ENCODE measurements at regions of chr19 and their contacts with region 1.

Region 1: DNA sequence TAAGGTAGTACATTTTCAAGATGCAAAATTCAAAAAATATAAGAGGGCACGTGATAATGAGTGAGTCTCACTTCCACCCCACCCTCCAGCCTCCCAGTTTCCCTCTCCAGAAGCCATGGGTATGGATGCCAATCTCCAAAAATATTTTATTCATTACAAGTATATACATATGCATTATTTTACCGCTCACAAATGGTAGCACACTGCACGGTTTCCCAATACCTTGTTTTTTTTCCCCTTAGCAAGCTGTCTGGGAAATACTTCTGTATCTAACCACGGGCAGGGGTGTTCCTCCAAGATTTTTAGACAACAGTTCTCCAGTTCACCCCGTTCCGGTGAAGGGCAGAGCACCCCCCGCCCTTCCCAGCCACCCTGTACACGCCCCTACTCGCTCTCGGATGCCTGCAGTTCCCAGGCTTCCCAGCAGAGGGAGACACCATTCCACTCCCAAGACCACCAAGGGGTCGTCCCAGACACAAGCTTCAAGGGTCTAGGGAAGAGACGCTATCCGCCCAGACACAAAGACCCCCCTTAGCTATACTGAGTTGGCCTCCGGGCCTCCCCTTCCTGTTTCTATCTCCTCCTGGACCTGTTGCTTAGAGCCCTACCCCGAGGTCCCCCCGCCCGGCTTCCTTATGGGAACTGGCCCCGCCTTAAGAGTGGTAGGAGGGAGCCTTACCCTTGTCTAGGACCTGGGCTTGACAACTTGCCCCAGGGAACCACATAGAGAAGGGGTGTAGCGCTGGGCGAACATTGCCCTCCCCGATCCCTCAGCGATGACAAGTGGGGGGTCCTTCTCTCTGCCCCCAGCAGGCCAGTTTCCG is 1.1 kb upstream of the FXYD3 start:
- DNase-seq: peak; percentile 56 to 64 (median 58)
- H3K4me3 ChIP-seq: no peak overlapping the region
- H3K4me3 Mint-ChIP-seq: peak overlapping the region in 2 of 8 donors; percentile 25 to 36
- H3K27ac ChIP-seq: no peak overlapping the region
- H3K27ac Mint-ChIP-seq: peak overlapping the region in 4 of 7 donors; percentile 30 to 77 (median 60)
- H3K4me1 ChIP-seq: peaks cover 9% of the 10 kb centered on the region
- H3K4me1 Mint-ChIP-seq: peaks cover 4 to 7% (median 5%) of the 10 kb centered on the region in 4 donors
- H3K27me3 ChIP-seq: no peaks in the 10 kb centered on the region
- H3K27me3 Mint-ChIP-seq: peaks cover 5 to 11% of the 10 kb centered on the region in 2 donors

Region 2: DNA sequence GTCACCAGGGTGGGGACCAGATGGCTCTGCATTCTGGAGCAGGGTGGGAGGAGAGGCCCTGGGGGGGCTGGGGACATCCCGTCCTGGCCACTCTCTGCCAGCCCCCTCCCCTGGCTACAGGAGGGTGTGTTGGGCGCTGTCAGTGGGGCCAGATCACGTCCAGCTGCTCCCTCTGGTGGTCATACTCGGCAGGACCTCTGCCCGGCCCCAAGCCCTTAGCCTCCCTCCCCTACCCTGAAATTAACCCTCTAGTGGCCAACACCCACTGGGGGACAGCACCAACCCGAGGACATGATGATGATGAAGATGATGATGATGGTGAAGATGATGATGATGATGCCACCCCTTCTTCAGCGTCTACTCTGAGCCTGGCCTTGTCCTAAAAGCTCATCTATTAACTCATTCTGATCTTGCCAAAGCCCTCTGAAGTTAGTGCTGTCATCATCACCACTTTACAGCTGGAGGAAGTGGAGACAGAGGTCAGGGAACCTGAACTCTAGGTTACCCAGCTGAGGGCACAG is 20.9 kb after region 1 on chr19:
- CTCF ChIA-PET with region 1: interaction called, 20 read pairs
- POLR2A ChIA-PET with region 1: no interaction called
- intact Hi-C with region 1: loop called (anchors 1 kb)
- DNase-seq: peak; percentile 48 to 66 (median 52)
- H3K4me3 ChIP-seq: no peak overlapping the region
- H3K4me3 Mint-ChIP-seq: no peak overlapping the region
- H3K27ac ChIP-seq: no peak overlapping the region
- H3K27ac Mint-ChIP-seq: peak overlapping the region in 2 of 7 donors; percentile 6 to 71
- H3K4me1 ChIP-seq: peaks cover 1% of the 10 kb centered on the region
- H3K4me1 Mint-ChIP-seq: peaks cover 2 to 21% (median 8%) of the 10 kb centered on the region in 4 donors
- H3K27me3 ChIP-seq: no peaks in the 10 kb centered on the region
- H3K27me3 Mint-ChIP-seq: no peaks in the 10 kb centered on the region

Region 3: GRCh38 chr19:35279985-35280821 is 165.6 kb after region 1 on chr19:
- CTCF ChIA-PET with region 1: no interaction called
- POLR2A ChIA-PET with region 1: no interaction called
- intact Hi-C with region 1: no loop called
- DNase-seq: no peak
- H3K4me3 ChIP-seq: no peak overlapping the region
- H3K4me3 Mint-ChIP-seq: no peak overlapping the region
- H3K27ac ChIP-seq: no peak overlapping the region
- H3K27ac Mint-ChIP-seq: peak overlapping the region in 4 of 7 donors; percentile 12 to 81 (median 48)
- H3K4me1 ChIP-seq: no peaks in the 10 kb centered on the region
- H3K4me1 Mint-ChIP-seq: peaks cover 2 to 9% (median 4%) of the 10 kb centered on the region in 4 donors
- H3K27me3 ChIP-seq: no peaks in the 10 kb centered on the region
- H3K27me3 Mint-ChIP-seq: peaks cover 6 to 15% of the 10 kb centered on the region in 2 donors

Measured in CD4-positive, alpha-beta memory T cell (primary cell).